Aorta (tissue), 5 donors: ENCODE measurements at regions of chr13 and their contacts with region 1.

Region 1: GRCh38 chr13:112969692-112970338 is 801 bp downstream of the MCF2L start:
- DNase-seq: no peak
- ATAC-seq: no peak
- H3K4me3 ChIP-seq: no peak overlapping the region
- H3K27ac ChIP-seq: no peak overlapping the region
- H3K4me1 ChIP-seq: no peaks in the 10 kb centered on the region
- H3K27me3 ChIP-seq: no peaks in the 10 kb centered on the region

Region 2: GRCh38 chr13:111539791-111540446 is 1429.9 kb before region 1 on chr13:
- intact Hi-C with region 1: loop called in 1 of 2 experiments (anchors 10 kb)
- DNase-seq: no peak
- ATAC-seq: no peak
- H3K4me3 ChIP-seq: no peak overlapping the region
- H3K27ac ChIP-seq: no peak overlapping the region
- H3K4me1 ChIP-seq: no peaks in the 10 kb centered on the region
- H3K27me3 ChIP-seq: no peaks in the 10 kb centered on the region

Region 3: DNA sequence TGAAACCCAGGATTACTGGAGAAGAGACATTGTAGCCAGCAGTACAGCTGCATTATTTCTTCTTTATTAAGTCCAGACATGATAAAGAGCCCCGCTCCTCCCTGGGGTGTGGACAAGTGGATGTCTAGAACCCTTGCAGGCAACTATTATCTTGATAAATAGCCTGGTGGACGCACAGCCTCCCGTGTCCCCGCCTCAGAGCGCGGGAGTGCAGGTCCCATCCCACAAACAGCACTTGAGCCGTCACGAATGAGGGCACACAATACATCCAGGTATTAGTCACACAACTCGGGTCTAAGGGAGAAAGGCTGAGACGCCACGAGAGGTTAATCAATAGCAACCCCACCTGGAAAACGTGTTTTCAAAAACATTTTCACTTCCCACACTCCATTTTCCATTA is 1116.1 kb before region 1 on chr13:
- intact Hi-C with region 1: no loop called
- DNase-seq: no peak
- ATAC-seq: no peak
- H3K4me3 ChIP-seq: no peak overlapping the region
- H3K27ac ChIP-seq: no peak overlapping the region
- H3K4me1 ChIP-seq: no peaks in the 10 kb centered on the region
- H3K27me3 ChIP-seq: no peaks in the 10 kb centered on the region

Region 4: DNA sequence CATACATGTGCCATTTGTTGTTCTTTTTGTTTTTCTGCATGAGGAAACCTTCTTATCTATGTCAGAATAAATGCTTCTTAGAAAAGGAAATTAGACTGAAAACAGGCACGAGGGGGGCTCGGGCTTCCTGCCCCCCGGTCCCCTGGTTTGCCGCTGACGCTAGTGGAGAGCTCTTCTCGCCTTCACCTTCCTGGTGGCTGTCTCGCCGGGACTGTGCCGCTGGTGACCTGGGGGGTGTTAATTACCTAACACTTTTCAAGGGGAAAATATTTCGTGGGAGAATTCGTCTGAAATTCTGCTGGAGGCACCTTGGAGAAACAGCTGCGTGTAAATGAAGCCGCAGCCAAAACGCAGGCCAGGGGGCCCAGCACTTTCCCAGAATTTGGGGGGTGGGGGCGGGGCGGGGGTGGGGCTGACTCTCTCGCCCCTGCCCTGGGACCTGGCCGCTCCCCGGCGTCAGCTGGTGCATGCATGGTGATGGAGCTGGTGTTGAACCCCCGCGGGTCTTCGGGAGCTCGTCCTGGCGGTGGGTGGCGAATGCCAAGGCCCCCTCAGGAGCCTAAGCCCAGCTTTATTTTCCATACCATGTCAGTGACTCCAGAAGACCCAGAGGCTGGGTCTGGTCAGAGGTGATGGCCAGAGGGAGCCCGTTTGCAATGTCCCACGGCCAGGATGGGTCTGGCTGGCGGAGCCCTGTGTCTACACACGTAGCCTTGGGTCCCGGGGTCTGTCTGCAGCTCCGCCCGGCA is 59.0 kb before region 1 on chr13:
- intact Hi-C with region 1: no loop called
- DNase-seq: no peak
- ATAC-seq: no peak
- H3K4me3 ChIP-seq: no peak overlapping the region
- H3K27ac ChIP-seq: no peak overlapping the region
- H3K4me1 ChIP-seq: no peaks in the 10 kb centered on the region
- H3K27me3 ChIP-seq: no peaks in the 10 kb centered on the region